ENCODE measurements at regions of chr13 and their contacts with region 1.

Region 1: DNA sequence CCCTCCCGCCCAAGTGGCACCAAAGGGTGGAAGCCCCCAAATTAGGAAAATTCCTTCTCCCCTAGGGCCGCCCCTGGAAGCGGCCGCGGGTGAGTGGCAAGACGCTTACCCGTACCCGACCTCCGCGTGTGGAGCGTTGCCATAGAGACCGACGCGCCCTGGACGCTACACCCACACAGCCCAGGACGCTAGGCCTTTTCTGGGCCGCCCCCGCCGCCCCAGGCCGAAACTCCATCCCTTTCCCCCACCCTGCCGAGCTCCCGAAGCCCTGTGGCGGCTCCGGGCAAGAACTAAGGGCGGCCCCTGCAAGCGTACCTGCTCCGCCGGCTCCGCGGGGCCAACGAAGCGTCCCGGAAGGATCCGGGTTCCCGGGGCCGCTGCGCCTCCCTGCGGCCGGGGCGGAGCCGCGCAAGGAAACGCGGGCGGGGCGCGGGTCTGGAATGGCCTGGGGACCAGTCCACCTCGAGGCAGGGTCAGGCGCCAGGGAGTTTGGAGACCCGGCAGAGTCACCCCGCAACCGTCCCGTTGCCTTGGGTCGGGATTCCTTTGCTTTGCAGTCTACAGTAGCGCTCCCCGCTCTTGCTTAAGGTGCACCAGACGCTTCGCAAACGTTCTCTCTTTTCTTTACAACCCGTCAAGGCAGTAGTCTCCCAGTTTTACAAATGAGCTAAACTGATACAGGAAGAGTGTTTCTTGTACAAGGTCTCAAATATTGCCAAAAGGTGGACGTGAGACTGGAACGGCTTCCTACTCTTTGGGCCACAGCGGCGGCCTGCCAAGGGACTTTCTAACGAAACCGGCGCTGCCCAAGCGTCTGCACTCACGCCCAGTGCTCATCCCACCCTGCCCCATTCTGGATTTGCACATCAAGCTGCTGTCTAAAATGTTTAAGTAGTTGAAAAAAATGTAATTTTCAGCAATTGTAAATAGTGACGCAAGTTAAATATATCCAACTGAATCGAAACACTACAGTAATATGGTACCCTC is at the start of gene NEK5:
- DNase-seq: peak; percentile 73
- H3K27ac ChIP-seq: 0 out of 2 replicates have a peak within 1 kb of the TSS, but pooled peaks have one; percentile 15
- CTCF ChIP-seq: peak; percentile 85

Region 2: DNA sequence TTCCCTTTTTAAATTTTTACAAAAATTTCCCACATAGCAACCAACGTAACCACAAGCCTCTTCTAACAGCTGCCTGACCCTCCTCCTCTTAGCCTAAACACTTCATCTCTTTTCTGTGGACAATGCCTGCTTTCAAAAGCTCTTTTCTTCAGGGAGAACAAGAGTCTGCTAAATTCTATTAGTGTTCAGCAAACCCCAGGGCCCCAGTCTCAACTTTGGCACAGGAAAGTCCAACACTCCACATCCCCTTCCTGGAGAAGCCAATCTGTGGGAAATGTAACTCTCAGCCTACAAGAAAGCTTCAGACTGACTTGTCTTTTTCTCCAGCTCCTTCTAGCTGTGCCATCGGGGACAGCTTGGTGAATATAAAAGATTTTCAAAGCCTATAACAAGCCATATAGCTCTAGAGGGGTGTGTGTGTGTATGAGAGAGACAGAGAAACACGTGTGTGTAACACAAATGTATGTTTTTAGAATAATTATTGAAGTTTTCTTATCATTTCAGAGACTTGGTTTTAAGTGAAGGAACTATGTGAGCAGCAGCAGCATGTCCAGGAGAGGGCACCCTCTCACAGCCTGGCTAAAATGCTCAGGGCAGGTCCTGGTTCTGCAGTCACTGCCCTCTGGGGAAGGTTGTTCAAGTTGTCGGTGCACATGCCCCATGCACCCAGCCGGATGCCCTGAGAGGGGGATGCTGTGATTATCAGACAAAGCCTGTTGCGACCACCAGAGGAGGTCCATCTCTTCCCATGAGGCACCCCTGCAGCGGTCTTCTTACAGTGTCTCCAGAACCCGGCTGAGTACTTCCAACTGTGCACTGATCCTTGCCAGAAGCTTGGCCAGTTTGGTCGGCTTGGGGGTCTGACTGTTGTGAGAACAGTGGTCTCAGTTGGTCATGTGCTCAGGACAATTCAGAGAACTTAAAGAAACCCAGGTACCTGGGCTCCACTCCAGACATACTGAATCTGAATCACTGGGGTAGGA is 232.8 kb before region 1 on chr13:
- CTCF ChIA-PET with region 1: interaction called, 38 read pairs
- POLR2A ChIA-PET with region 1: no interaction called
- DNase-seq: peak; percentile 52
- H3K27ac ChIP-seq: no peak overlapping the region
- CTCF ChIP-seq: peak; percentile 67

Region 3: GRCh38 chr13:51911860-51912510 is 217.0 kb before region 1 on chr13:
- CTCF ChIA-PET with region 1: interaction called, 12 read pairs
- POLR2A ChIA-PET with region 1: no interaction called
- DNase-seq: no peak
- H3K27ac ChIP-seq: no peak overlapping the region
- CTCF ChIP-seq: no peak

Region 4: DNA sequence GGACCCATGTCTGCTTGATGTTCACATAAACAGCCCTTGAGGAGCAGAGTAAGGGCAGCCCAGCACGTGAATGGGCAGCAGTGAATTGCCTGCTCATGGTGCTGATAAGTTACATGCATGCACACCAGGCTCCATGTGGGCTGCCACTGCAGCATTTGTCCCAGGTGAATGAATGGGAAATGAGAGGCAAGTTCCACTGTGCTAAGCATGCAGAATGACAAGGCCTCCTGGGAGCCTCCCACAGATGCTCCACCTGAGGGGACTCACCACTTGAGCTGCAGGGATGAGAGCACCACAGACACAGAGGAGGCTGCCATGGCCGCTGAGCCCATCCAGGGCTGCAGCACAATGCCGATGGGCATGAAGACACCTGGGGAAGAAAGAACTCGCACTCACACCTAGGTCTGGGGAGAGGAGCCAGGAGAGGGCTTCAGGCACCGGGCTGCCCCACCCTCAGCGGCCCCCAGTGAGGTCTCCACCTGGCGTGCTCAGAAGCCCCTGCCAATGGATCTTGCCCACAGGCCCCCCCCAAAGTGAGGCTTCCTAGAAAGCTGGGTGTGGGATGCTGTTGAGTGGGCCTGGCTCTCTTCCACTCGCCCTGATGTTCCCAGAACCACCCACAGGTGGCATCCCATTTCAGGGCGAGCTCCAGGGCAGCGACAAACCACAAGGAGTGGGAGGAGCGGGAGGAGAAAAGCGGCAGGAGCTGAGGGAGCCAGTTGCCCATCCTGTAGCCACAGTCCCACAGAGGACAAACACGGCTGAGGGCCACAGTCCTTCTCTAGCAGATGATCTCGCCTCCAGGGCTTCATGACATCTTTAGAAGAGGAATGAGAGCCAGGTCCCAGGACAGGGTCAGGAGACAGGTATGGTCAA is 193.4 kb before region 1 on chr13:
- CTCF ChIA-PET with region 1: interaction called, 10 read pairs
- POLR2A ChIA-PET with region 1: no interaction called
- DNase-seq: peak; percentile 20
- H3K27ac ChIP-seq: no peak overlapping the region
- CTCF ChIP-seq: 0 out of 2 replicates have a peak, but pooled peaks have one; percentile 12

Measured in RWPE1 (cell line).